ENCODE measurements at regions of chr4 and their contacts with region 1.

Region 1: GRCh38 chr4:167443841-167444240 is 209.5 kb upstream of the SPOCK3 start:
- DNase-seq: no peak
- H3K4me3 ChIP-seq: no peak overlapping the region
- H3K27ac ChIP-seq: no peak overlapping the region
- H3K4me1 ChIP-seq: no peaks in the 10 kb centered on the region
- H3K27me3 ChIP-seq: no peaks in the 10 kb centered on the region
- CTCF ChIP-seq: no peak
- POLR2A ChIP-seq: no peak

Region 2: DNA sequence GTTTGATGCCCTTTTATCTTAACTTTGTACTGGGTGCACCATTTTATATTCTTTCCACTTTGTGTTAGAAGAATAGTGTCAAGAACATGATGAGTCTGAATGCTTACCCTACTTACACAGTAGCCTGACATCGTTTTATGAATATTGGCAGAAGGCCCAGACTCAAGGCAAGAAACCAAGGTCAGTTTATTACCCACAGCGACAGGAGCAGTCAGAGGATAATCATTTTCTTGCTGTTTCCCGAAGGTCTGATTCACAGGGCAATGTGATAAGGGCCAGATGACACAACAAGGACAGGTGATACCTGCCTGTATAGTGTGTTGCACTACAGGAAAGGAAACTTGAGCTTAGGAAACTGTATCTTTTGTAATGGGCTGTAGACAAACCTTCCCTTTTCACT is 627.0 kb before region 1 on chr4:
- intact Hi-C with region 1: no loop called
- DNase-seq: no peak
- H3K4me3 ChIP-seq: no peak overlapping the region
- H3K27ac ChIP-seq: no peak overlapping the region
- H3K4me1 ChIP-seq: no peaks in the 10 kb centered on the region
- H3K27me3 ChIP-seq: no peaks in the 10 kb centered on the region
- CTCF ChIP-seq: no peak
- POLR2A ChIP-seq: no peak

Region 3: DNA sequence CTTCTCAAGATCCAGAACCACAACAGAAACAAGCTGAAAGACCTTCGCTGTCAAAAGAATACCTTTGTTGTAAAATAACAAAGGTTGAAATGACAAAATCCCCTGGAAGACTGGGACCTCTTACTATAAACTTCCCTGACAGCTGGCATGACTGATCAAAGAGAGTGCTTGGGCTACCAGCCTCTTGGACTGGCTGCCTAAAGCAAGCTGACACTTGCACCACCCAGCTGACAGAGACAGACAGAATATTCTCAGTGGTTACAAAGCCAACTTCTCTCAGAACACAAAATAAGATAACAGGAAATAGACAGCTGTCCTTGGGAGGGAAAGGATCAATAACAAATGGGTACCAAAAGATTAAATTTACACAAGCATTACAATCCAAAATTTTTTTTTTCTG is 32.1 kb after region 1 on chr4:
- intact Hi-C with region 1: loop called (anchors 1 kb)
- DNase-seq: no peak
- H3K4me3 ChIP-seq: no peak overlapping the region
- H3K27ac ChIP-seq: no peak overlapping the region
- H3K4me1 ChIP-seq: no peaks in the 10 kb centered on the region
- H3K27me3 ChIP-seq: no peaks in the 10 kb centered on the region
- CTCF ChIP-seq: no peak
- POLR2A ChIP-seq: no peak

Measured in vagina (tissue), 2 donors.